ENCODE measurements at regions of chr7 and their contacts with region 1.

Region 1: GRCh38 chr7:21514062-21514461 is 28.8 kb upstream of the DNAH11 start:
- DNase-seq: no peak
- ATAC-seq: no peak
- H3K4me3 ChIP-seq: no peak overlapping the region
- H3K4me3 Mint-ChIP-seq: no peak overlapping the region
- H3K27ac ChIP-seq: no peak overlapping the region
- H3K27ac Mint-ChIP-seq: no peak overlapping the region
- H3K4me1 ChIP-seq: no peaks in the 10 kb centered on the region
- H3K4me1 Mint-ChIP-seq: no peaks in the 10 kb centered on the region
- H3K27me3 ChIP-seq: no peaks in the 10 kb centered on the region
- H3K27me3 Mint-ChIP-seq: no peaks in the 10 kb centered on the region

Region 2: DNA sequence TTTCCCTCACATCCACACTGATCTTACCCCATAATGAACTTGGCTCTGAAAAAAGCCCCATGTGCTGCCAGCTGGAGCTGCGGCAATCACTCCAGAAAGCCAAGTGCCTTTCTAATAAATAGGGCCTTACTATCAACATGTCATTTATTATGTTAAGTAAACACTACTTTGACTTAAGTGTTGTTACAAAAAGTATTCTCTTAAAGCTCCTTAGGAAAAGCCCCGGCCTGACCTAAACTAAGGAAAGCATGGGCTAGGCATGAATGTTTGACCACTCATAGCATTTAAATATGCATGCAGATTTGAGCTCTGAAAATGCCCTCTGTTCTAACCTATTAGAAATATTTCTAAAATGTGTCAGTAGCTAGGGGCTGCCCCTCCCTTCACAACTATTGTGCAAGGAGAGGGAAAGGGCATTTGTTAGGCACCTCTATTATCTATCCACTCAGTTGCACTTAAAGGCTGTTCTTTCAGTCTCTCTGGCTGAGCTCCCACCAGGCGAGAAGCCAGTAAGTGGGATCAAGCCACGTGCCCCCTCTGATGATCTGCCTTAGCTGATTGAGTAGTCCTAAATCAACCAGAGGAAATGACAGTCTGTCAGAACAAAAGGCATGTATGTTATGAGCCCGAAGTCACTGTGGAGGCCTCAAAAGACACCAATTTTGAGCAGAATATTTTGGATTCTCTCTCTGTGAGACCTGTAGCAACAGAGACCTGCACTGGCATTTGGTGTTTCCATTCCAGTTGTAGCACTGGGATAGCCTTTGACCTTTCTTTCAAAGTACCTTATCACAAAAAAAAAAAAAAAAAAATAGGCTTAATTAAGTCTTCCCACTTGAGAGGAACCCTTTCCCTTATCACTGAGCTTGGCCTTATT is 1106.2 kb before region 1 on chr7:
- CTCF ChIA-PET with region 1: no interaction called
- POLR2A ChIA-PET with region 1: no interaction called
- DNase-seq: no peak
- ATAC-seq: no peak
- H3K4me3 ChIP-seq: no peak overlapping the region
- H3K4me3 Mint-ChIP-seq: no peak overlapping the region
- H3K27ac ChIP-seq: no peak overlapping the region
- H3K27ac Mint-ChIP-seq: no peak overlapping the region
- H3K4me1 ChIP-seq: no peaks in the 10 kb centered on the region
- H3K4me1 Mint-ChIP-seq: no peaks in the 10 kb centered on the region
- H3K27me3 ChIP-seq: no peaks in the 10 kb centered on the region
- H3K27me3 Mint-ChIP-seq: no peaks in the 10 kb centered on the region

Region 3: DNA sequence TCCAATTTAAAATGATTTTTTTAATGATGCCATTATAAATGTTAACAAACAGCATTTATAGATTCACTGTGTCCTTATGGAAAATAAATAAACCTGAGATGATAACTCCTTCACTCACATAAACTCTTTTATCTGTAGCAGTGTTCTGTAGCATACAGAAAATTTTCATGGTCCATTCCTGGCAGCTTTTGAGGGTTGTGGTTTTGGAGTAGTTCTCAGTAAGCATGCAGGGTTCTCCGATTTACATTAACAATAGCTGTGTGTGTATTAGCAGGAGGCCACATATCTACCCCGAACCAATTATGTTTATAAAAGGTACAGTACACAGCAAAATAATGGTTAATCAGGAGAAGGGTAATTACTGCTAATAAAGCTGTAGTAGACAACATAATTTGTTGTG is 268.9 kb after region 1 on chr7:
- CTCF ChIA-PET with region 1: no interaction called
- POLR2A ChIA-PET with region 1: interaction called in 1 of 2 experiments, 16 read pairs
- DNase-seq: no peak
- ATAC-seq: no peak
- H3K4me3 ChIP-seq: no peak overlapping the region
- H3K4me3 Mint-ChIP-seq: no peak overlapping the region
- H3K27ac ChIP-seq: no peak overlapping the region
- H3K27ac Mint-ChIP-seq: no peak overlapping the region
- H3K4me1 ChIP-seq: peaks cover 0 to 2% of the 10 kb centered on the region in 2 experiments
- H3K4me1 Mint-ChIP-seq: no peaks in the 10 kb centered on the region
- H3K27me3 ChIP-seq: no peaks in the 10 kb centered on the region
- H3K27me3 Mint-ChIP-seq: peaks cover 0 to 3% of the 10 kb centered on the region in 2 donors